ENCODE measurements at regions of chr11 and their contacts with region 1.

Region 1: GRCh38 chr11:117426269-117426685 is 98.6 kb downstream of the CEP164 start:
- DNase-seq: no peak
- H3K4me3 ChIP-seq: no peak overlapping the region
- H3K27ac ChIP-seq: no peak overlapping the region
- H3K4me1 ChIP-seq: no peaks in the 10 kb centered on the region
- H3K27me3 ChIP-seq: peaks cover 14% of the 10 kb centered on the region
- CTCF ChIP-seq: peak; percentile 93 to 99 (median 97)

Region 2: GRCh38 chr11:117786135-117786890 is 360.0 kb after region 1 on chr11:
- dilution Hi-C with region 1: no loop called
- DNase-seq: no peak
- H3K4me3 ChIP-seq: no peak overlapping the region
- H3K27ac ChIP-seq: no peak overlapping the region
- H3K4me1 ChIP-seq: no peaks in the 10 kb centered on the region
- H3K27me3 ChIP-seq: peaks cover 26% of the 10 kb centered on the region
- CTCF ChIP-seq: no peak

Region 3: DNA sequence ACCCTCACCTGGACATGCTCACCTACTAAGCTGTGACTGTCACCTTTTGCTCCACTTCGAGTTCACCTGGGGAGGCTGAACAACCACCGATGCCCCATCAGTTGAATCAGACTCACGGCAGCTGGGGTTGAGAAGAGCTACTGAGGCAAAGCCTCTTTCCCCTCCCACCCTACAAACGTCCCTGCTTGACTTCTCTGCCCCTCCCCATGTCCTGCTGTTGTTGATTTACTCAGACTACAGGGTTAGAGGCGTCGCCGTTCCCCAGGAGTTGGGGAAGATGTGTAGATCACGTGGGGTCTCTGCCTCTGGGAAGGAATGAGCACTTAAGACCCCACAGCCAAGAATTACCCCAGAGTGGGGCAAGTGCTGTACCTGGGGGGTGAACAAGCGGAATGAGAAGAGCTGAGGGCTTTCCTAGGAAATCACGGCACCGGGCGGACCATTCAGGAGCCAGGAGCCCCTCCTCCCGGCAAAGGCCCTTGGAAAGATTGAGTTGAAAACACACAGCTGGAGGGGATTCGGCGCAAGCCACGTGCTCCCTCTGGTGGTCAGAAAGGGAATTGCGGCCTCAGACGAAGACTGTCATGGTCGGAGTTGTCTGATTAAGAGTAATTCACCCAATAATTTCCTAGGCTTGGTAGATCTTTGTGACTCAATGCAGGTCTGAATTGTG is 391.2 kb after region 1 on chr11:
- dilution Hi-C with region 1: loop called (anchors 25 kb)
- DNase-seq: no peak
- H3K4me3 ChIP-seq: no peak overlapping the region
- H3K27ac ChIP-seq: peak overlapping the region; percentile 61
- H3K4me1 ChIP-seq: peaks cover 14% of the 10 kb centered on the region
- H3K27me3 ChIP-seq: no peaks in the 10 kb centered on the region
- CTCF ChIP-seq: peak; percentile 93 to 100 (median 99)